ENCODE measurements at regions of chr18 and their contacts with region 1.

Region 1: DNA sequence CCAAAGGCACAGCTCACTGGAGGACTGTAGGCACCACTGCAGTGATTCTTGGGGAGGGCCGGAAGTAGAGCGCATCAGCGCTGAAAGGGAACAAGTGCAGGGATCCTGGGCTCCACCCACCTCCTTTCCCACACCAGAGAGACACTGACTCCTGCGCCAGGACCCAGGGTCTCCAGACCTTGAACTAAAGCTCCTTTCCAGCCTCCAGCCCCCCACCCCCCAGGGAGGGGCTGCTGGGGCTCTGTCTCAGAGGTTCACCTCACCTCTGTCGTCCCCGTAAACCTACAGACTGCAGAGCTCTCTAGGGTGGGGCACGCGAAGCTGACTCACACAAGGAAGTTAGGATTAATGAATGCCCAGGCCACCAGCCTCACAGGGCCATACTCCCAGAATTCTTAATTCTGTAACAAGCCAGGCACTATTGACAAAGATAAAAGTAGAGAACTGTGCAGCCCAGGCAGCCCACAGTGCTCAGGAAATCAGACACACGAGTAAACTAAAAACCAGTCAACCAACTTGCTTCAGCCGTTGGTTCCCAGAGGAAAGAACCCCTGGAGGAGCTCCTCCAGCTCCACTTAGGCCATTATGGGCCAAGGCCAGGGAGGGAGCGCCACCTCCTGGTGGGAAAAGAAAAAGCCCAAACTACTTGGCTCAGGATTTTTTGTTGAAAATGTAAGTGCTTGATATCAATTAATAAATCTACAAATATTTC is 45.1 kb upstream of the ACAA2 start:
- DNase-seq: peak; percentile 66
- H3K4me3 ChIP-seq: no peak overlapping the region
- H3K27ac ChIP-seq: no peak overlapping the region
- H3K4me1 ChIP-seq: peaks cover 4% of the 10 kb centered on the region
- H3K27me3 ChIP-seq: no peaks in the 10 kb centered on the region
- CTCF ChIP-seq: peak; percentile 88 to 93

Region 2: DNA sequence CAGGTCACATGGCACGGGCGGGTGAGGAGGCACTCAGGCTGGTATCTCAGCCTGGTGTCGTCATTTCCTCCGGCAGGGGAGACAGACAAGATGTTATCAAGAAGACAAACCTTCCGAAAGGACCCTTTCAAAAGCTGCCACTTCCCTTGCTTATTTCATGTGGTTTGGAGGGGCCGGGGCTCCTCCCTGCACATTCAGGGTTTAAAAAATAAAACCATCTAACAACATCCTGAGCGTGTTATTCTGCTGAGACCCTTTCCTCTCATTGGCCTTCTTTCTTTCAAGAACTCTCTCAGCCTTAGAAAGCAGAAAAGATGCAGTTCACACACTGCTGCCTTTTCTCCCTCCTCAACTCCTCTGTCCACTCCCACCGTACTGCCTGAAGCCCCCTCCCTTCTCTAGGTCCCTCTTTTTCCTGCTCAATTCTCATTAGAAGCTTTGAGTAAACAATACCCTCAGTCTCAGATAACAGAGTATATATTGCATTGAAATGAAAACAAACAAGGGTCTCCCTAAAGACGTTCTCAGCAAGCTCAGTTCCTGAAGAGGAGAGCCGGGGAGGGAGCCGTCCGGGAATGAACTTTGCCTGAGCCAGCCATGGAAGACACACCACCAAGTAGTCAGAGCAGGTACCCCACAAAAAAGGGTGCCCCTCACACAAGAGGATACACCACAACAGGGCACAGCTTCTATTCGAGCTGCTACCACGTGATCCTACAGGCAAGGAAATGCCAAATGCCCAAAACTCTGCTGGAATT is 917.4 kb before region 1 on chr18:
- CTCF ChIA-PET with region 1: no interaction called
- dilution Hi-C with region 1: no loop called
- in situ Hi-C with region 1: no loop called
- intact Hi-C with region 1: no loop called
- DNase-seq: no peak
- H3K4me3 ChIP-seq: no peak overlapping the region
- H3K27ac ChIP-seq: no peak overlapping the region
- H3K4me1 ChIP-seq: peaks cover 77% of the 10 kb centered on the region
- H3K27me3 ChIP-seq: no peaks in the 10 kb centered on the region
- CTCF ChIP-seq: no peak

Region 3: DNA sequence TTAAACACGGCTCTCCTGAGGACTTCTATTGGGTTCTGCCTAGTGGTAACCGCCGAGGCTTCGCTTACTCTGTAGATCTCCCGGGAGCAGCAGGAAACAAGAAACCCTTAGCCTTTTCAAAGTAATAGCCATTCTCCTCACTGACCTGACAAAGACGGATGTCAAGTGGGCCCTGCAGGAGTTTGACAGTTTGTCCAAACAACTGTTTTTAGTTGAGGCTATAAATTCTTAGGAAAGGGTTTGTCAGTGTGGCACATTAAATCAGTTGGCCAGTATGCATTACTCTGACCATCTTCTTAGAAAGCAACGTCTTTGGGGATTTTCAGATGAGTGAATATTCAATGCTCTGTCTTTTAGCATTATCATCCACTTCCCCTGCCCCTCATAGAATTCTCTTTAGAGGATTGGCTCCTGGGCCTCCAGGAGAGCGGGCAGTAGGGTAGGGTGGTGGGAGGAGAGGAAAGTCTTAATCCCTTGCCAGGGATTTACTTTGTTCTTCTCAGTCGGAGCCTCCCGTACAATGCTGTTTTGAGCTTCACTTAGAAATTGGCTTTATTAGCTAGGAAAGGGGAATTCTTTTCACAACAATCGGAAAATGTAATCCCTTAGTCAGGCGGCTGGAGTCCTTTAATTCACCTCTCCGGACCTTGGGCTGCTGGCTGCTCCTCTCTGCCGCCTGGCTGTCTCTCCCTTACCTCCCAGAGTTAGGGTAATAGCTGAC is 358.1 kb before region 1 on chr18:
- CTCF ChIA-PET with region 1: no interaction called
- dilution Hi-C with region 1: no loop called
- in situ Hi-C with region 1: loop called (anchors 10 kb)
- intact Hi-C with region 1: no loop called
- DNase-seq: no peak
- H3K4me3 ChIP-seq: no peak overlapping the region
- H3K27ac ChIP-seq: no peak overlapping the region
- H3K4me1 ChIP-seq: no peaks in the 10 kb centered on the region
- H3K27me3 ChIP-seq: peaks cover 1% of the 10 kb centered on the region
- CTCF ChIP-seq: no peak

Region 4: GRCh38 chr18:49510393-49511115 is 347.9 kb before region 1 on chr18:
- CTCF ChIA-PET with region 1: interaction called, 17 read pairs
- dilution Hi-C with region 1: no loop called
- in situ Hi-C with region 1: loop called (anchors 10 kb)
- intact Hi-C with region 1: loop called (anchors 1 kb)
- DNase-seq: peak; percentile 46
- H3K4me3 ChIP-seq: no peak overlapping the region
- H3K27ac ChIP-seq: no peak overlapping the region
- H3K4me1 ChIP-seq: no peaks in the 10 kb centered on the region
- H3K27me3 ChIP-seq: no peaks in the 10 kb centered on the region
- CTCF ChIP-seq: peak; percentile 92 to 93

Region 5: DNA sequence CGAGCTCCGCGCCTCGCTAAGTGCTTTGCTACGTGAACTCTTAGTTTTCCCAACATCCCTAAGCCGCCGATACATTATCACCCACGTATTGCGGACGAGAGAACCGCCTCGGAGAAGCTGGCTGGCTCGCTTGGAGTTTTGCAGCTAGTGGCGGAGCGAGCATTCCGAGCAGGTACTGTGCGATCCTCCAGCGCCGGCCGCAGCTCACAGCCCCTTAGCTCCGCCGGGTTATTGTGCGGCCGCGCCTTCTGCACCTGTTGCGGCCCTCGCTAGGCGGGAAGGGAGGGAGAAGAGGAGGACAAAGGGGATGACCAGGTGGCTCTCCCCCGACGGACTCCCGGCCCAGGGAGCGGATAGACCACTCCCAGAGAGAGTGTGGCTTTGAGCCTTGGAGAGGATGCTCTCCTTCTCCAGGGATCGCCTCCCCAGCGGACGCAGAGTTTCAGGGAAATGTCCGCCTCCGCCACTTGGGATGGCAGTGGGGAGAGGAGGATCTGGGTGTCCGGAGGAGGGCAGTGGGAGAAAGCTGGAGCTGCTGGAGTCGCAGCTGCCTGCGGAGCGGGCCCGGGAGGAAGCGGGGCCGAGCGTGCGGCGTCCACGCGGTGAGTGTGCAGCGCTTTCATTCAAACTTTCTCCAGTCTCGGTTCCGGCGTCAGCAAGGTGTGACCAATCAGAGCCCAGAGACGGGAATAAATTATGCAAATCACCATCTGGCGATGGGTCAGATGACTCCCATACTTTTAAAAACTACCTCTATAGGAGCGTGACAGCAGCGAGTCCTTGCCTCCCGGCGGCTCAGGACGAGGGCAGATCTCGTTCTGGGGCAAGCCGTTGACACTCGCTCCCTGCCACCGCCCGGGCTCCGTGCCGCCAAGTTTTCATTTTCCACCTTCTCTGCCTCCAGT is 296.9 kb before region 1 on chr18 and contains the start of gene LIPG:
- CTCF ChIA-PET with region 1: interaction called, 5 read pairs
- dilution Hi-C with region 1: no loop called
- in situ Hi-C with region 1: no loop called
- intact Hi-C with region 1: loop called (anchors 1 kb)
- DNase-seq: peak; percentile 97
- H3K4me3 ChIP-seq: peak within 1 kb of the TSS; percentile 40 to 70 (median 61)
- H3K27ac ChIP-seq: peak within 1 kb of the TSS; percentile 65
- H3K4me1 ChIP-seq: peaks cover 28% of the 10 kb centered on the region
- H3K27me3 ChIP-seq: no peaks in the 10 kb centered on the region
- CTCF ChIP-seq: no peak
- total RNA-seq, gene LIPG: 78.8 to 153 TPM

Region 6: GRCh38 chr18:49768051-49768391 is 90.4 kb before region 1 on chr18:
- CTCF ChIA-PET with region 1: no interaction called
- dilution Hi-C with region 1: no loop called
- in situ Hi-C with region 1: no loop called
- intact Hi-C with region 1: loop called (anchors 1 kb)
- DNase-seq: peak; percentile 65
- H3K4me3 ChIP-seq: no peak overlapping the region
- H3K27ac ChIP-seq: no peak overlapping the region
- H3K4me1 ChIP-seq: no peaks in the 10 kb centered on the region
- H3K27me3 ChIP-seq: no peaks in the 10 kb centered on the region
- CTCF ChIP-seq: peak; percentile 87 to 95

Region 7: DNA sequence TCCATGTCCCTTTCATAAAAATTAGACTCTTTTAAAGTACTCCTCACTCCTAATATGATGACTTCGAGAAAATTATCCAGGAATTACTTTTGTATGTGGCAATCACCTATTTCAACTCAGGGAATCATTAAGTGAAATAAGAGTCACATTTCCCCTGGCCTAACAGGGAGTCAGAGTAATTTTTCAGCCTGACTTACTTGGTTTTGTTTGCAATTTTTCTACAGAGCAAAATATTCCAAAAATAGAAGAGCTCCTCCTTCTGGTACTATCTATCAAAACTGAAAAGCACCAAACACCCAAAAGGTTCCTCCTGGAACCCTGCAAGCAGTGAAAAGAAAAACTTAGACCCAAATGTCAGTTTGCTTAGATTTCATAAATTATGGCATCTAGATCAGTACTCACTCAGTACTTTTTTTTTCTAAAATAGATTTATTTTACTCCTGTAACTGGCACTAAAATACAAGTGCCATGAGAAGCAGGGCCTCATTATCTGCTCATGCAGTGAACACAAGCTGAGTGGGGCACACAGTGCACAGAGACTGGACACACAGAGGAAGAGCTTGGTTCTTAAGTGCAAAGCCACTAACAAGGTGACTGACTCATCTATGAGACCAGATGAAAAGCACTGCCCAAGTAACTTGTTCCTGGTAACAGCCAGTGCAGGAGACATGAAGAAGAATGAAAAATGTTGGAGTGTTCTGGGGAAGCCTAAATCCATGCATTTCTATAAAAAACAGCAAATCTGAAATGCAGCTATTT is 73.9 kb before region 1 on chr18:
- CTCF ChIA-PET with region 1: no interaction called
- dilution Hi-C with region 1: no loop called
- in situ Hi-C with region 1: no loop called
- intact Hi-C with region 1: loop called (anchors 5 kb)
- DNase-seq: no peak
- H3K4me3 ChIP-seq: no peak overlapping the region
- H3K27ac ChIP-seq: no peak overlapping the region
- H3K4me1 ChIP-seq: no peaks in the 10 kb centered on the region
- H3K27me3 ChIP-seq: no peaks in the 10 kb centered on the region
- CTCF ChIP-seq: peak in 1 of 2 donors; percentile 28

Region 8: GRCh38 chr18:50079581-50080295 is 221.3 kb after region 1 on chr18:
- CTCF ChIA-PET with region 1: no interaction called
- dilution Hi-C with region 1: no loop called
- in situ Hi-C with region 1: no loop called
- intact Hi-C with region 1: no loop called
- DNase-seq: no peak
- H3K4me3 ChIP-seq: no peak overlapping the region
- H3K27ac ChIP-seq: no peak overlapping the region
- H3K4me1 ChIP-seq: peaks cover 25% of the 10 kb centered on the region
- H3K27me3 ChIP-seq: no peaks in the 10 kb centered on the region
- CTCF ChIP-seq: no peak

Region 9: GRCh38 chr18:50401888-50402287 is 543.4 kb after region 1 on chr18:
- CTCF ChIA-PET with region 1: interaction called, 10 read pairs
- dilution Hi-C with region 1: no loop called
- in situ Hi-C with region 1: no loop called
- intact Hi-C with region 1: no loop called
- DNase-seq: peak; percentile 50
- H3K4me3 ChIP-seq: no peak overlapping the region
- H3K27ac ChIP-seq: no peak overlapping the region
- H3K4me1 ChIP-seq: peaks cover 3% of the 10 kb centered on the region
- H3K27me3 ChIP-seq: no peaks in the 10 kb centered on the region
- CTCF ChIP-seq: peak in 1 of 2 donors; percentile 25